Upper lobe of right lung (tissue), 1 donor: ENCODE measurements at regions of chr5 and their contacts with region 1.

Region 1: DNA sequence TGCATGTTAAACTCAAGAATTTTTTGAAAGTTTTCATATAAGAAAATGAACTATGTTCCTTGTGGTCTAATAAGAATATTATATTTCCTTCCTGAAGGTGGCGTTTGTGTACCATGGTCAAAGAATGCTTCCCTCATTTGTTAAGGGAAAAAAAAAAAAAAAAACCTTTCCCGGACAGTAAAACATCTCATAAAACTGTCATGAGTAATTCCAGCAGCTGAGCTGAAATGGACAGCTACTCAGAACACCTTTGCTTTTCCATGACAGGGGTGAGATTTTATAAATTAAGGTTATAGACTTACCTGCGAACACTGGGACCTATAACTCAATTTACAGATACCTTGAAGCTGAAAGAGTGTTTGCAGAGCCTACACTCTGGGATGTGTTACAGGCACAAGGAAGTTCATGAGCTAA is 113.2 kb upstream of the RANBP3L start:
- DNase-seq: no peak
- ATAC-seq: peak; percentile 54
- H3K4me3 ChIP-seq: no peak overlapping the region
- H3K27ac ChIP-seq: no peak overlapping the region
- H3K4me1 ChIP-seq: no peaks in the 10 kb centered on the region
- H3K27me3 ChIP-seq: no peaks in the 10 kb centered on the region
- CTCF ChIP-seq: peak; percentile 54

Region 2: DNA sequence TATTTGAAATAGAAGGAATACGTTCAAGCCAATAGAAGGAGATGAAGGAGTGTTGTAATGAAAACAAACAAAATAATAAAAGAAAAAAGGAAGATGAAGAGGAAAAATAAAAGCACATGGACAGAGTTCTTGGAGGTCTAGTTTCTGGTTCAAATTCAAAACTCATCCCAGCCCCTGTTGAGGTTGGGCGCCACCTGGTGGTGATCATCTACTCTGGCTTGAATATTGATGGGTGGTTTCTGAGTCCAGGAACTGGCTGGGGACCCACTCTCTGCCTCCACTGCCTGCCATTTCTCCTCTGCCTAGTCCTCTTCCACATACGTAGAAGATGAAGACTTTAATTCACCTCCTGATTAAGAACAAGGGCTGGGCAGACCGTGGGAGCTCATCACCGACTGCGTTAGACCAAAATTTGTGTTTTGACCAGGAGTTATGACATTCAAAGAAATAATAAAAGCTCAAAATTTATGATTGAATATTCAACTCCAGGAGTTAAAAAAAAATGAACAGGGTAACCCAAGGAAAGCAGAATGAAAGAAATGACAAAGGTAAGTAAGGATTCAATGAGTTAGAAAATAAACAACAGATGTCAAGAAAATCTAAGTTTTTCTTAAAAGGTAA is 92.6 kb after region 1 on chr5:
- intact Hi-C with region 1: loop called (anchors 10 kb)
- DNase-seq: peak; percentile 84
- ATAC-seq: peak; percentile 90
- H3K4me3 ChIP-seq: no peak overlapping the region
- H3K27ac ChIP-seq: no peak overlapping the region
- H3K4me1 ChIP-seq: peaks cover 3% of the 10 kb centered on the region
- H3K27me3 ChIP-seq: no peaks in the 10 kb centered on the region
- CTCF ChIP-seq: peak; percentile 91

Region 3: DNA sequence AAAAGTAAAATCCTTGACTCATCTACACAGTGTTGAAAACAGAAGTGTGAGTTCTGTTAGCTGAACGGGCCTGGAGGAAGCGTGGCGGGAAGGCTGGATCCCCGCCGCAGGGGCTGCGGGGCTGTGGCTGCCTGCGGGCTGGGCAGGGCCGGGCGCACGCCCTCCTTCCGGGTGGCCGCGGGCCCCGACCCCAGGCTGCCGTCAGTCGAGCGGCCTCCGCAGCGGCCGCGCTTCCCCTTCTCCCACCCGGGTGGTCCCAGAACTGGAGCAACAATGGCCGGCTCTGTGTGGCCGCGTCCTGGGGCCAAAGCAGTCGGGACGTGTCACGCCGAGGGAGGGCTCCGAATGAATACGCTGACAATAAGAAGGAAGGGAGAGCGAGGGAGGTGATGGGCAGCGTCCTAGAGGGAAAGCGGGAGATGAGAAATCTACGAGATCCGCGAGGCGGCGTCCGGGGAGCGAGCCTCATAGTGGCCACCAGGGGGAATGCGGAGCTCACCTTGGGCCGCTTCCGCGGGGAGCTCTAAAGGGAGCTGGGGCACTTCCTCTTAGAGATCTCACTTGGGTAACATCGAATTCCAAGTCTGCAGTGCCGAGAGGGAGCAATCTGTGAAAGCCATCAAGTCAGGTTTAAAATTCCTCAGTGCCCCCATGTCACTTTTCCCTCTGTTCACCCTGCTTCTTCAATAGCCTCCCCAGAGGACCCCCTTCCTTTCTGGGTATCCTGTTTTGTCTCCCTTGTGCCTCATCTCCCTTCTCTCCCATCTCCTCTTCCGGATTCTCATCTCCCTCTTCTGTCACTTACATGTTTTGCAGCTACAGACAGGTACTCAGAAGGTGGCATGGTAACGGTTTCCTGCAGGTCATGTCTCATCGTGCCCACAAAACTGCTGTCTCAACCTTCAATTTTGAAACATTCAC is 275.4 kb after region 1 on chr5:
- intact Hi-C with region 1: loop called (anchors 10 kb)
- DNase-seq: peak; percentile 91
- ATAC-seq: peak; percentile 91
- H3K4me3 ChIP-seq: peak overlapping the region; percentile 55
- H3K27ac ChIP-seq: peak overlapping the region; percentile 78
- H3K4me1 ChIP-seq: peaks cover 17% of the 10 kb centered on the region
- H3K27me3 ChIP-seq: peaks cover 12% of the 10 kb centered on the region
- CTCF ChIP-seq: peak; percentile 80